CD4-positive, alpha-beta memory T cell (primary cell): ENCODE measurements at regions of chr16 and their contacts with region 1.

Region 1: GRCh38 chr16:56450986-56451752 is at the starts of genes NUDT21 and OGFOD1:
- DNase-seq: peak; percentile 92 to 97 (median 94)
- H3K4me3 ChIP-seq: peak within 1 kb of the TSS; percentile 54 to 95
- H3K4me3 Mint-ChIP-seq: peak within 1 kb of the TSS; percentile 96 to 100 (median 99)
- H3K27ac ChIP-seq: peak within 1 kb of the TSS; percentile 73
- H3K27ac Mint-ChIP-seq: peak within 1 kb of the TSS; percentile 89 to 100 (median 98)
- H3K4me1 ChIP-seq: peaks cover 57% of the 10 kb centered on the region
- H3K4me1 Mint-ChIP-seq: peaks cover 38 to 69% (median 56%) of the 10 kb centered on the region in 4 donors
- H3K27me3 ChIP-seq: no peaks in the 10 kb centered on the region
- H3K27me3 Mint-ChIP-seq: no peaks in the 10 kb centered on the region
- total RNA-seq, gene NUDT21: 109 to 110 TPM
- total RNA-seq, gene OGFOD1: 42.7 to 47.2 TPM

Region 2: GRCh38 chr16:56425439-56425832 is 25.7 kb before region 1 on chr16 and contains the start of gene AMFR:
- CTCF ChIA-PET with region 1: interaction called, 6 read pairs
- POLR2A ChIA-PET with region 1: interaction called, 11 read pairs
- intact Hi-C with region 1: loop called (anchors 1 kb)
- DNase-seq: peak; percentile 63 to 83 (median 78)
- H3K4me3 ChIP-seq: peak within 1 kb of the TSS; percentile 65 to 70
- H3K4me3 Mint-ChIP-seq: peak within 1 kb of the TSS; percentile 92 to 99 (median 96)
- H3K27ac ChIP-seq: peak within 1 kb of the TSS; percentile 65
- H3K27ac Mint-ChIP-seq: peak within 1 kb of the TSS; percentile 84 to 97 (median 93)
- H3K4me1 ChIP-seq: peaks cover 38% of the 10 kb centered on the region
- H3K4me1 Mint-ChIP-seq: peaks cover 30 to 42% (median 37%) of the 10 kb centered on the region in 4 donors
- H3K27me3 ChIP-seq: no peaks in the 10 kb centered on the region
- H3K27me3 Mint-ChIP-seq: no peaks in the 10 kb centered on the region
- total RNA-seq, gene AMFR: 59.8 to 67.6 TPM

Region 3: DNA sequence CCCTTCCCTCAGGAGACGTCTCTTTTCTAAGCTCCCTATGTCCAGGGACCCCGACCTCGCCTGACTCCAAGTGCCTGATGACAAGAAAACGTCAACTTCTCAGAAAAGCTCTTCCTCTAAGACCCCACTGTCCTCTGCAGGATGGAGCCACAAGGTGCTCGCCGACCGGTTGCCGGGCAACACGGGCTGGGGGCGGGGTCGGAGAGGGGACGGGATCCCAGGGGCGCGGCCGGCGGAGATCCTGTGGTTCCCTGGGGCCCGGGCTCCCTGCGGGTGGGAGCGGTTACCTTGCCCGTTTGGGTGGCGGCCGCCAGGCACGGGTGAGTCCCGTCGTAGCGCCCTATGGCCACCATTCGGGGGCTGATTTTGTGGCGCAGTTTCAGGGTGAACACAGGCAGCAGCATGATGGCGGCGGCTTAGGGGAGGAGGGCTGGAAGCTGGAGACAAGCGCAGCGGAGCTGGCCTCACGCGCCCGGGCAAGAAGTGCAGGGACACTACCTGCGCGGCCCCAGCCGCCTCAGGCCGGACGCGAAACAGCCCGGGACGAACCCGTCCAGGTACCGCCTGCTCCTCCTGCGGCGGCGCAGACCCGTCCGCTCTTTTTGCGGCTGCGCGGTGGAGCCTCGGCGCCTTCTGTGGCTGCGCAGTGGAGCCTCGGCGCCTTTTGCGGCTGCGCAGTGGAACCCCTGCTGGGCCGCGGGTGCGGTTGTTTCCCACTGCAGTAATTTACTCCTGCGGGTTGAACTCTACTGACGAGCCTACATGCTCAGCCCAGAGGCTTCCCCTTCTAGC is 68.5 kb after region 1 on chr16 and contains the start of gene BBS2:
- CTCF ChIA-PET with region 1: no interaction called
- POLR2A ChIA-PET with region 1: interaction called, 5 read pairs
- intact Hi-C with region 1: loop called (anchors 1 kb)
- DNase-seq: peak; percentile 88 to 92 (median 91)
- H3K4me3 ChIP-seq: peak within 1 kb of the TSS; percentile 63 to 93
- H3K4me3 Mint-ChIP-seq: peak within 1 kb of the TSS; percentile 86 to 90 (median 88)
- H3K27ac ChIP-seq: peak within 1 kb of the TSS; percentile 73
- H3K27ac Mint-ChIP-seq: peak within 1 kb of the TSS; percentile 82 to 93 (median 92)
- H3K4me1 ChIP-seq: peaks cover 37% of the 10 kb centered on the region
- H3K4me1 Mint-ChIP-seq: peaks cover 37 to 59% (median 44%) of the 10 kb centered on the region in 4 donors
- H3K27me3 ChIP-seq: no peaks in the 10 kb centered on the region
- H3K27me3 Mint-ChIP-seq: no peaks in the 10 kb centered on the region
- total RNA-seq, gene BBS2: 95.8 to 96.0 TPM